ENCODE measurements at regions of chr16 and their contacts with region 1.

Region 1: GRCh38 chr16:1363501-1364041 is 11.8 kb downstream of the GNPTG start:
- DNase-seq: peak; percentile 77
- ATAC-seq: peak; percentile 97
- H3K4me3 Mint-ChIP-seq: no peak overlapping the region
- H3K27ac Mint-ChIP-seq: no peak overlapping the region
- H3K4me1 Mint-ChIP-seq: peaks cover 2% of the 10 kb centered on the region
- H3K27me3 Mint-ChIP-seq: no peaks in the 10 kb centered on the region

Region 2: GRCh38 chr16:1351582-1352362 is 11.8 kb before region 1 on chr16 and contains the starts of genes GNPTG and TSR3:
- CTCF ChIA-PET with region 1: interaction called, 14 read pairs
- POLR2A ChIA-PET with region 1: no interaction called
- DNase-seq: peak; percentile 85
- ATAC-seq: peak; percentile 90
- H3K4me3 Mint-ChIP-seq: peak within 1 kb of the TSS; percentile 81
- H3K27ac Mint-ChIP-seq: peak within 1 kb of the TSS; percentile 82
- H3K4me1 Mint-ChIP-seq: peaks cover 36% of the 10 kb centered on the region
- H3K27me3 Mint-ChIP-seq: no peaks in the 10 kb centered on the region
- total RNA-seq, gene GNPTG: 24.2 to 25.1 TPM
- total RNA-seq, gene TSR3: 48.5 to 50.7 TPM

Region 3: GRCh38 chr16:1378804-1379303 is 15.3 kb after region 1 on chr16:
- CTCF ChIA-PET with region 1: interaction called, 13 read pairs
- POLR2A ChIA-PET with region 1: interaction called, 3 read pairs
- DNase-seq: peak; percentile 62
- ATAC-seq: no peak
- H3K4me3 Mint-ChIP-seq: peak overlapping the region; percentile 75
- H3K27ac Mint-ChIP-seq: peak overlapping the region; percentile 41
- H3K4me1 Mint-ChIP-seq: peaks cover 19% of the 10 kb centered on the region
- H3K27me3 Mint-ChIP-seq: no peaks in the 10 kb centered on the region